Naive thymus-derived CD4-positive, alpha-beta T cell (primary cell): ENCODE measurements at regions of chr2 and their contacts with region 1.

Region 1: GRCh38 chr2:86035883-86036668 is 69.6 kb downstream of the POLR1A start:
- DNase-seq: peak in 8 of 9 donors; percentile 63 to 89 (median 84)
- ATAC-seq: peak; percentile 65
- H3K4me3 ChIP-seq: peak overlapping the region; percentile 48
- H3K4me3 Mint-ChIP-seq: peak overlapping the region; percentile 80 to 88 (median 86)
- H3K27ac ChIP-seq: peak overlapping the region; percentile 88
- H3K27ac Mint-ChIP-seq: peak overlapping the region; percentile 94 to 100 (median 100)
- H3K4me1 ChIP-seq: peaks cover 55 to 84% of the 10 kb centered on the region in 2 donors
- H3K4me1 Mint-ChIP-seq: peaks cover 57 to 92% (median 88%) of the 10 kb centered on the region in 7 donors
- H3K27me3 ChIP-seq: no peaks in the 10 kb centered on the region
- H3K27me3 Mint-ChIP-seq: peaks cover 0 to 5% (median 0%) of the 10 kb centered on the region in 5 donors

Region 2: GRCh38 chr2:85826990-85827878 is 208.8 kb before region 1 on chr2:
- CTCF ChIA-PET with region 1: interaction called, 38 read pairs
- POLR2A ChIA-PET with region 1: interaction called, 5 read pairs
- intact Hi-C with region 1: loop called (anchors 1 kb)
- DNase-seq: peak; percentile 64 to 83 (median 79)
- ATAC-seq: peak; percentile 99
- H3K4me3 ChIP-seq: peak overlapping the region; percentile 49
- H3K4me3 Mint-ChIP-seq: peak overlapping the region in 7 of 10 donors; percentile 8 to 65 (median 55)
- H3K27ac ChIP-seq: no peak overlapping the region
- H3K27ac Mint-ChIP-seq: peak overlapping the region in 8 of 9 donors; percentile 7 to 70 (median 63)
- H3K4me1 ChIP-seq: peaks cover 4 to 5% of the 10 kb centered on the region in 2 donors
- H3K4me1 Mint-ChIP-seq: peaks cover 18 to 31% (median 25%) of the 10 kb centered on the region in 7 donors
- H3K27me3 ChIP-seq: no peaks in the 10 kb centered on the region
- H3K27me3 Mint-ChIP-seq: peaks cover 0 to 31% (median 0%) of the 10 kb centered on the region in 5 donors

Region 3: GRCh38 chr2:85999061-85999831 is 36.8 kb before region 1 on chr2:
- CTCF ChIA-PET with region 1: no interaction called
- POLR2A ChIA-PET with region 1: interaction called, 6 read pairs
- intact Hi-C with region 1: loop called (anchors 1 kb)
- DNase-seq: peak in 8 of 9 donors; percentile 25 to 62 (median 46)
- ATAC-seq: peak; percentile 83
- H3K4me3 ChIP-seq: peak overlapping the region; percentile 33
- H3K4me3 Mint-ChIP-seq: peak overlapping the region; percentile 55 to 83 (median 68)
- H3K27ac ChIP-seq: peak overlapping the region; percentile 66
- H3K27ac Mint-ChIP-seq: peak overlapping the region; percentile 85 to 96 (median 93)
- H3K4me1 ChIP-seq: peaks cover 48 to 52% of the 10 kb centered on the region in 2 donors
- H3K4me1 Mint-ChIP-seq: peaks cover 36 to 79% (median 64%) of the 10 kb centered on the region in 7 donors
- H3K27me3 ChIP-seq: no peaks in the 10 kb centered on the region
- H3K27me3 Mint-ChIP-seq: no peaks in the 10 kb centered on the region

Region 4: GRCh38 chr2:86079981-86080911 is 44.2 kb after region 1 on chr2:
- CTCF ChIA-PET with region 1: interaction called, 34 read pairs
- POLR2A ChIA-PET with region 1: interaction called, 9 read pairs
- intact Hi-C with region 1: loop called (anchors 1 kb)
- DNase-seq: peak; percentile 65 to 83 (median 78)
- ATAC-seq: peak; percentile 85
- H3K4me3 ChIP-seq: no peak overlapping the region
- H3K4me3 Mint-ChIP-seq: peak overlapping the region in 3 of 10 donors; percentile 36 to 40 (median 37)
- H3K27ac ChIP-seq: no peak overlapping the region
- H3K27ac Mint-ChIP-seq: peak overlapping the region in 5 of 9 donors; percentile 19 to 75 (median 53)
- H3K4me1 ChIP-seq: peaks cover 10 to 22% of the 10 kb centered on the region in 2 donors
- H3K4me1 Mint-ChIP-seq: peaks cover 0 to 46% (median 30%) of the 10 kb centered on the region in 7 donors
- H3K27me3 ChIP-seq: no peaks in the 10 kb centered on the region
- H3K27me3 Mint-ChIP-seq: no peaks in the 10 kb centered on the region